HEK293T (cell line): ENCODE measurements at regions of chr3 and their contacts with region 1.

Region 1: GRCh38 chr3:36957862-36958686 is 13.2 kb upstream of the TRANK1 start:
- DNase-seq: no peak

Region 2: GRCh38 chr3:37071921-37072320 is 113.8 kb after region 1 on chr3:
- CTCF ChIA-PET with region 1: no interaction called
- POLR2A ChIA-PET with region 1: no interaction called
- DNase-seq: no peak

Region 3: DNA sequence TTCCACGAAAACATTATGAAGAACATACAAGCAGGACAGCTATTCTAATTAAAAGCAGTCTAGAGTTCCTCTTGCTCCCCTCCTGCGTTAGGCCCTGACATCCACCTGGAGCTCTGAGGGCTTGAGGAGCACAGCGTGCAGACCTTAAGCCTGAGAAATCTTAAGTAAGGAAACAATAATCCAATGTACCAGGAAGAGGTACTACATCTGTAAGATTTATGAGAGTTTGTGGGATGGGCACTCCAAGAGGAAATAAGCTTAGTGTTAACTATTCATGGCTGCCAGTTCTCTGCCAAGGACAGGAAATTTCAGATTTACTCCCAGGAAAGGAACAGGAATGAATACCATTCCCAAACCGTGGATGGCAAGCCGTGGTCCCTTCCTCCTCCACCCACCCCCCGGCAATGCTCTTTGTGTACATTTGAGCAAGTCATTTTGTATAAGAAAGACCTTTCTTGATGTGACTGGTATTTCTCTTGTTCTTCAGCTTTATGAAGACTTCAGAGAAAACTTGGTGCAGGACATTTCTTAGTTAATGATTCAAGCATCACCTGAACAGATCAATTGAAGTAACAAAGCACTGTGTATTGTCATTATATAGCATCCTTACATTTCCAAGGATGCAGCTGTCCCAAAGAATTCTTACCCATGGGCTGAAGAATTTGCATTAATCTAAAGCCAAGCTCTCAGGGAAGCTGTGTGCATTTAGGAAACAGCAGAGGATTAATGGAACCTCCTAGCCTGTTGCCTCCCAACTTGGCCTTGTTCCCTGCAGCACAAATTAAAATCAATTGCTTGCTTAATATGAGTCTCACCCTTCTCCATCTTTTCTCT is 1003.8 kb after region 1 on chr3:
- CTCF ChIA-PET with region 1: interaction called, 13 read pairs
- POLR2A ChIA-PET with region 1: no interaction called
- DNase-seq: no peak